Tibial artery (tissue), 4 donors: ENCODE measurements at regions of chr1 and their contacts with region 1.

Region 1: DNA sequence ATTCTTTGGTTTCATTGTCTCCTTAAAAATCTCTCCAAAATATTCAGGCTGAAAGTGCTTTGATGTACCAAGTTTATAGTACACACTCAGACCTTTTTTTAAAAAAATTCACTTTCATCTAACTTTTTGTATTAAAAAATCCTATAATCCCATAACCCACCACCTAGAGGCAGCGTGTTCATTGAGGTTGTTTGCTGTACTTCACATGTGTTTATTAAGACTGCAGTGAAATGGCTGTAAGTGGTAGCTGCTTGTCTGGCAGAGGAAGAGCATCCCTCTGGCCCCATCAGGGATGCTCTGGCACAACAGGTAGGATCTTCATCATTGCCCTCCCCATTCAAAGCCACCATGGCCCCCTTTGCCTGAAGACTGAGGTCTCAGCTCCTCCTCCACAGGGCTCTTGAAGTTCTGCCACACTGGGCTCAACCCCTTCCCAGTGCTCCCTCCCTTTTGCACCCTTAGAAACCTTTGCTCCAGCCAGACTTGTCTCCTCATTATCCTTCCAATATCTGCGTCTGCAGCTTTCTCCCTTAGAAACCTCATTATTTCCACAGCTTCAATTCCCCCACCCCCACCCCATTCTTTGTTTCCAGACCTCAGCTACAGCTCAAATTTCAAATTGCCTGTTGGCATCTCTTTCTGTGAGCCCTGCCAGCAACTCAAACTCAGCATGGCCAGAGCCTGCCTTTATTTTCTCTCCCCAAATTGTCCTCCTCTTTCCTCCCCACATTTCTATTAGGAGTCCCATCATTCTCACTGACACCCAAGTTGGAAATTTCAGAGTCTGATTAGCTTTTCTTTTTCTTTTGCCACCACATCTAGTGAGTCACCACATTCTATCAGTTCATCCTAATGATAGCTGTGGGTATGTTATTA is 369.6 kb upstream of the USP24 start:
- DNase-seq: peak in 1 of 2 donors; percentile 53
- H3K4me3 ChIP-seq: no peak overlapping the region
- H3K27ac ChIP-seq: peak overlapping the region; percentile 78 to 84
- H3K4me1 ChIP-seq: peaks cover 0 to 100% (median 72%) of the 10 kb centered on the region in 4 donors
- H3K27me3 ChIP-seq: no peaks in the 10 kb centered on the region
- CTCF ChIP-seq: peak in 1 of 2 experiments; percentile 8

Region 2: DNA sequence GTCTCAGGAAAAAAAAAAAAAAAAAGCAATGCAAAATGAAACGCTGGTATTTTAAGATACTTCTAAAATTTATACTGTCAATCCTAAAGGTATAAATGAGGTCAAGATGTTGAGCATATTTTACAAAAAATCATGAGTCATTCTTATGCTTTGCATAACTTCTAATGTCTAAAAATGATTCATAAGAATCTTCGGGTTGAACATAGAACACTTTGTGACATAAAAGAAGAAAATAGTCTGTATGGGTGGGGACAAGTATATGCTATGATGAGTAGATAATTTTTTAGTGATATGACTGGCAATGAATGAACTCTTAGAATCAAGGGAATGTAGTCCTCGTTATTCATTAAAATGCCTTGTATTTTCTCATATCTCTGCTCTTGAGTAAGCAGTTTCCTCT is 47.3 kb after region 1 on chr1:
- intact Hi-C with region 1: loop called (anchors 10 kb)
- DNase-seq: no peak
- H3K4me3 ChIP-seq: no peak overlapping the region
- H3K27ac ChIP-seq: peak overlapping the region; percentile 69 to 85
- H3K4me1 ChIP-seq: peaks cover 0 to 58% (median 34%) of the 10 kb centered on the region in 4 donors
- H3K27me3 ChIP-seq: no peaks in the 10 kb centered on the region
- CTCF ChIP-seq: no peak